Thyroid gland (tissue), 4 donors: ENCODE measurements at regions of chr17 and their contacts with region 1.

Region 1: DNA sequence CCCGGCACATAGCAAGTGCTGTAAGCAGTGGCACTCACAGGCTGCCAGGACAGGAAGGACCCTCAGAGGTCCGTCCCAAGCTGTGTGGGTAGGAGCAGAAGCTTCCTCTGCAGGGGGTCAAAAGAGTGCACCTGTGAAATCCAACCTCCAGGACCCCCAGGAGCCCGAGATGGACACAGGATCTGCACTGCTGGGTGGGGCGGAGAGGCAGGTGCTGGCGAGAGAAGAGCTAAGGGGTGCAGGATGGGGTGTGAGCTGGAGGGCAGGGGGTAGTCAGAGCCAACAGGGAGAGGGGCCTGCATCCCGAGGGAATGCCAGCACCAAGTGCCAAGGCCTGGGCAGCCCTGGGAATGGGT is 650 bp upstream of the AANAT start:
- DNase-seq: no peak
- H3K4me3 ChIP-seq: no peak overlapping the region
- H3K27ac ChIP-seq: no peak overlapping the region
- H3K4me1 ChIP-seq: peaks cover 0 to 3% of the 10 kb centered on the region in 2 donors
- H3K27me3 ChIP-seq: no peaks in the 10 kb centered on the region
- CTCF ChIP-seq: no peak
- POLR2A ChIP-seq: no peak

Region 2: DNA sequence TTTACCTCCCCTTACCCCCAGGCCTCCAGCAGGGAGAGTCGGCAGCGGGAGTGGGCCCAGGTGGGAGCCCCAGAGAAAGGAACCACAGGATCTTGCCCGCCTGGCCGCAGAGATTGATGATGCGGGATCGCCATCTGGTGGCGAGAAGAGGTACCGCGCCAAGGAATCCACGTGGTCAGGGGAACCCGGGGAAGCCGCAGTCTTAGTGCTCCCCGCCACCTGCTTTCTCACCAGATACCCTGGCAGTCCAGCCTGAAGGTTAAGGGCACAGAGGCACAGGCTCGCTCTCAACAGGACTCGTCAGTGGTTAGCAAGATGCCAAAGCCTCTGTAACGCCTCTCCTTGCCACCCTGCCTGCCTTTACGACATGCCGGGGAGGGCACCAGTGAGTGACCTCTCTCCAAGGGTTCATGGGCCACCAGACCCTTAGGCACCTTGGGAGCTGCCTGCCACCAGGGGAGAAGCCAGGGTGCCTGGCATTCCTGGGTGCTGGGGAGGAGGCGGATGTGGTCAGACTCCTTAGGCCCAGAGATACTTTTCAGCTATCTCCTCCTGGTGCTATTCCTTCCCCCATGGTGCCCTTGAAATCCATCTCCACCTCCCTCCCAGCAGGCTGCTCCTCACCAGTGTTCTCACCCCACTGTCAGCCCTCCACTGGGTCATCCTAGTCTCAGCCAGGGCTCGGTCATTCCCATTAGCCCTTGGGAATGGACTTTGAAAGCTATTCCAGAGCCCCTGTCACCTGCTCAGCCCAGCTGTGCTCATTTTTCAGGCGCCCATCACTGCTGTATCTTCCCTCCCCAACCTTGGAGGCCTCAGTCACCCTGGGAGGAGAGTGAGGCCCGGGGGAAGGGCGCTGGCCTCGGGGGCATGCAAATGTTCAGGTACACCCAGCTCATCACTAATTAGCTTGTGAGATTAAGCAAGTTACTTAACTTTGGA is 39.9 kb after region 1 on chr17:
- intact Hi-C with region 1: loop called (anchors 1 kb)
- DNase-seq: peak; percentile 77 to 81
- H3K4me3 ChIP-seq: no peak overlapping the region
- H3K27ac ChIP-seq: no peak overlapping the region
- H3K4me1 ChIP-seq: peaks cover 4 to 10% of the 10 kb centered on the region in 2 donors
- H3K27me3 ChIP-seq: no peaks in the 10 kb centered on the region
- CTCF ChIP-seq: peak; percentile 88 to 96 (median 94)
- POLR2A ChIP-seq: no peak